ENCODE measurements at regions of chr10 and their contacts with region 1.

Region 1: DNA sequence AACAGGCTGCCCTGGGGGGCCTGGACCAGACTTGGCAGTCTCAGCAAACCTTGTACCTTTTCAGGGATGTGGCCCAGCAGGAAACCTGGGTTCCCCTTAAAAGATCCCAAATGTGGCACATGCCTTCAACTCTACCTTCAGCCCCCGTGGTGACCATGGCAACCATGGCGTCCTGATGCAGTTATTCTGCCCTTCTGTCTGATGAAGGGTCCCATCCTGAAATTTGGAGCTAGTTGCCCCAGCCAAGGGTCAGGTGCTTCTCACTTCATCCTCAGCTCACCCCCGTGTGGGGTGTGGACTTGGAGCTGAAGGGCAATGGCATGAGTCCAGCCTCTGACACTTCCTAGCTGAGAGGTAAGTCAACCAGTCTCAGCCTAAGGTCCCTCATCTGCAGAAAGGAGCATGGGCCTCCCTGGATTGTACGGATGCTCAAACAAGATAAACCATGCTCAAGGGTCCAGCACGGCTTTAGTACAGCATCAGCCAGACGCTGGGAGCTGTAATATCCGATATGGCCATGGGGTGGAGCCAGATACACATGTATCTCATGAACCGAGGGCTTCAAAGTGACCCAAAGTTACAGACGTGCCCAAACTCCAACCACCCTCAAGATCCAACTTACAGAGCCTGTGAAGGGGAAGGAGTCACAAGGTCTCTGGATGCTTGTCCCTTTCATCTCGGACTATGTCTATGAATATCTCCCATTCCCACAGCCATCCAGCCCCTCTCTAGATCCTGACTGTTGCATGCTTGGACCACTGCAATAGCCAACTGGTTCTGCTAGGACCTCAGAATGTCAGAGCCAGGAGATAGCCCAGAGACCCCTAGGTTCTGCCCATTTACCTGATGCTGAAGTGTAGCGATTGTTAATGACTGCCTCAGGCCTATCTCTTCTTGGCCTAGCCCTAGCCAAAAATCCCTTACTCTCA is 142.5 kb downstream of the SH3PXD2A start:
- DNase-seq: peak; percentile 88

Region 2: GRCh38 chr10:103884681-103885139 is 171.9 kb after region 1 on chr10:
- CTCF ChIA-PET with region 1: interaction called, 18 read pairs
- POLR2A ChIA-PET with region 1: no interaction called
- DNase-seq: peak; percentile 81

Region 3: GRCh38 chr10:103942866-103943265 is 230.0 kb after region 1 on chr10:
- CTCF ChIA-PET with region 1: no interaction called
- POLR2A ChIA-PET with region 1: no interaction called
- DNase-seq: no peak

Measured in HEK293T (cell line).